ENCODE measurements at regions of chr15 and their contacts with region 1.

Region 1: GRCh38 chr15:29070449-29071231 is 184.9 kb downstream of the APBA2 start:
- DNase-seq: no peak
- ATAC-seq: no peak
- H3K4me3 ChIP-seq: no peak overlapping the region
- H3K27ac ChIP-seq: no peak overlapping the region
- H3K4me1 ChIP-seq: no peaks in the 10 kb centered on the region
- H3K27me3 ChIP-seq: peaks cover 0 to 7% (median 0%) of the 10 kb centered on the region in 7 donors
- CTCF ChIP-seq: no peak

Region 2: DNA sequence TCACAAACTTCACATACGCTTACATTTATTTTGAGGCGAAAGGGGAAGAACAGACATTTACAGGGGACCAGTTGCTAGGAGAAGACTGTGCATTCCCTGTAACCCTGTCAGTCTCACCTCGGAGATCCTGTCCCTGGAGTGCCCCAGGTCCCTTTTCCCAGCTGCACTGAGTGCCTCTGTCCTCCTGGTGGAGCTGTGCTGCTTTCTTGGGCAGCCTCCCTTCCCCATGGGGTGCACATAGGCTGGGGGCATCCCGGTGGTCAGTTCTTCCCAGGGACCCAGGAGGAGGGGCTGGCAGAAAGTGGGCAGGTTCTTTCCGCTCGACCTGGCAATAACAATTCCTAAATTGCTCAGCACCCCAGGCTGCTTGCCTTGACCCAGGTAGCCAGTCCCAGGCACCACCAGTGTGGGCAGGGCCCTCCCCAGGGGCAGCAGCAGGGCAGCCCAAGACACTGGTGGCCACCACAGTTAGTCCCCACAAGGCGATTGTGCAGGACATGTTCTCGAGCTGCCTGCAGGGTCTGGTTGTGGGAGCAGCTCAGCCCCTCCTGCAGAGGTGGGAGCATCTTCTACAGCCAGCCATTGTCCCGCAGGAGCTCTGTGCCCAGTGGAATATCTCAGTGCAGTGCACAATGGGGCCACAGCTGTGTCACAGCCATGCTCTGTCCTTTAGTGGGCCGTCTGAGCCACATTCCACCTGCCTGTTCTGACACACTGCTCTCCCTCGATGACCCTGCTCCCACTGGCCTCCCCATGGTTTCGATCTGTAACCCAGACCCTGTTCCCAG is 148.5 kb before region 1 on chr15:
- intact Hi-C with region 1: no loop called
- DNase-seq: no peak
- ATAC-seq: peak in 1 of 8 donors; percentile 44
- H3K4me3 ChIP-seq: no peak overlapping the region
- H3K27ac ChIP-seq: no peak overlapping the region
- H3K4me1 ChIP-seq: no peaks in the 10 kb centered on the region
- H3K27me3 ChIP-seq: peaks cover 0 to 28% (median 20%) of the 10 kb centered on the region in 7 donors
- CTCF ChIP-seq: peak in 1 of 9 donors; percentile 7

Region 3: DNA sequence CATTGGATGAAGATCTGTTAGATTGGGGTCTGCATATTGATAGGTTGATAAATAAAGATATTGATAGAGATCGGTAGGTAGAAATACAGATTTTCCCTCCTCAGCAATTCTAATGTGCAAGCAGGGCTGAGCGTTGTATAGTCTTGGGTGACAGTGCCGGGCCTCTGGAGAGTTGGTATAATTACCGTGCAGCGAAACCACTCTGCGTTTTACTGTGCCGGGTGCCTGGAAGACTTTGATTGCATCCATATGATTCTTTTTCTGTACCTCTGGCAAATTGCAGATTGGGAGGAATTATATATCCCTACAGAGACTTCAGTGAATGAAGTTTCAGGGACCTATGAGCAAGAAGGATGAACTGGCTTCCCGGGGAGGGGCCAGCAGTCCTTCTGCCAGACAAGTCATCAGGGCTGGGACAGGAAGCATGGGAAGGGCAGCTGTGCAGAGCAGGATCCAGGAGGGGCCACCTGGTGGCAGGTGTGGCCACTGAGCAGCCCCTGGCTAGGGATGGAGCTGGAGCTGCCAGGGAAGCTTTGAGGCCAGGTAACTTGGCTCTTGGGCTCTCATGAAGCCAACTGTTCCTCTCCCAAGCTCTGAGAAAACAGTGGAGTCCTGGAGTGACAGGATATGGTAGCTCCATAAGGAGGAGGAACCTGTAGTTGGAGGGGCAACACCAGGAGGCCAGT is 52.4 kb before region 1 on chr15:
- intact Hi-C with region 1: no loop called
- DNase-seq: no peak
- ATAC-seq: no peak
- H3K4me3 ChIP-seq: no peak overlapping the region
- H3K27ac ChIP-seq: no peak overlapping the region
- H3K4me1 ChIP-seq: no peaks in the 10 kb centered on the region
- H3K27me3 ChIP-seq: peaks cover 0 to 14% (median 0%) of the 10 kb centered on the region in 7 donors
- CTCF ChIP-seq: no peak

Region 4: DNA sequence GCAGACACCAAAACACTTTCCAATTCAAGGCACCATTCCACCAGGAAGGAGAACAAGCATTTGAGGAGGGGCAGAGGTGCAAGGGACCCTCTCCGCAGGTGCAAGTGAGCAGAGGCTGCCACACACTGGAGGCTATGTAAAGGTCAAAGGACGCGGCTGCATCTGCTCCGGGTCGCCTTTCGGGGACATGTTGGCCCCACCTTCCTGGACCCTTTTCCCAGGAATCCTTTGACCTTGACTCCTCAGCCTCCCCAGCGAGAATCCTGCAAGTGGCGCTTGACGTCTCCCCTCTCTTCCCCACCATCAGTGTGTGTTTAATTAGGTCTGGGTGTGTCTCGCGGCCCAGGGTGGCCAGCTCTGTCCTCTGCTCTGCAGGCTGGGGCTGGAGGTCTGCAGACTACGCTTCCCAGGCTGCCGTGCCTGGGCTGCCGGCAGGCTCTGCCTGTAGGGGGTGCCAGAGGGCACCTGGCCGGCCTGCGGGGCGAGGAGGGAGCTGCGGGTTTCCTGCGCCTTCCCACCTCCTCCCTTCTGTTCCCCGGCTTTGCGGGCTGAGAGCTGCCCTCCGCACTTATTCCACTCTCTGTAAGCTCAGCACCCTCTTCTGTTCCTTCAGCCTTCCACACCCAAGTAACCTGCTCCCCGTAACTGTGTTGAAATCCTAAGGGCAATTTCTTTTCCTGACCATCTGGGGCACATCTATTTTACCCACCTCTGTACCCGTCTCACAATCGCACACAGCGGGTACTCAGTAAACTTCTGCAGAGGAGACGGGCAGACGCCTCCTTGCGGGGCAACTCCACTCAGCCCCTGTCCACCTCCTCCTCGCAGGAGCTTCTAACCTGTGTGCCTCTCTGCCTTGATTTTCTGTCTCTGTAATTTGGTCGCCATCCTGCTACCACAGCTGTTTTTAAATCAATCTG is 69.2 kb after region 1 on chr15:
- intact Hi-C with region 1: loop called in 1 of 10 experiments (anchors 10 kb)
- DNase-seq: peak in 1 of 2 donors; percentile 50
- ATAC-seq: peak; percentile 50 to 85 (median 67)
- H3K4me3 ChIP-seq: no peak overlapping the region
- H3K27ac ChIP-seq: no peak overlapping the region
- H3K4me1 ChIP-seq: peaks cover 0 to 7% (median 0%) of the 10 kb centered on the region in 9 donors
- H3K27me3 ChIP-seq: peaks cover 0 to 58% (median 24%) of the 10 kb centered on the region in 7 donors
- CTCF ChIP-seq: peak; percentile 53 to 87 (median 75)